ENCODE measurements at regions of chr15 and their contacts with region 1.

Region 1: GRCh38 chr15:51971375-51972133 is at the start of gene LEO1:
- DNase-seq: peak; percentile 83
- ATAC-seq: peak; percentile 88
- H3K4me3 Mint-ChIP-seq: peak within 1 kb of the TSS; percentile 98
- H3K27ac Mint-ChIP-seq: peak within 1 kb of the TSS; percentile 93
- H3K4me1 Mint-ChIP-seq: peaks cover 20% of the 10 kb centered on the region
- H3K27me3 Mint-ChIP-seq: no peaks in the 10 kb centered on the region
- total RNA-seq, gene LEO1: 26.5 to 28.3 TPM

Region 2: GRCh38 chr15:51917493-51917892 is 54.1 kb before region 1 on chr15:
- POLR2A ChIA-PET with region 1: no interaction called
- DNase-seq: no peak
- ATAC-seq: peak; percentile 54
- H3K4me3 Mint-ChIP-seq: no peak overlapping the region
- H3K27ac Mint-ChIP-seq: no peak overlapping the region
- H3K4me1 Mint-ChIP-seq: no peaks in the 10 kb centered on the region
- H3K27me3 Mint-ChIP-seq: no peaks in the 10 kb centered on the region

Region 3: GRCh38 chr15:51982013-51982769 is 10.6 kb after region 1 on chr15:
- POLR2A ChIA-PET with region 1: interaction called, 16 read pairs
- DNase-seq: peak; percentile 60
- ATAC-seq: peak; percentile 97
- H3K4me3 Mint-ChIP-seq: peak overlapping the region; percentile 78
- H3K27ac Mint-ChIP-seq: peak overlapping the region; percentile 86
- H3K4me1 Mint-ChIP-seq: peaks cover 14% of the 10 kb centered on the region
- H3K27me3 Mint-ChIP-seq: no peaks in the 10 kb centered on the region

Measured in activated naive CD8-positive, alpha-beta T cell treated with anti-CD3 and anti-CD28 coated beads, Interleukin-2, amount 10 ng/mL, durations not matched to agents 7 days and 5 days (primary cell).